Activated B cell treated with CpG ODN at 0.5 μM for 24 hours (primary cell): ENCODE measurements at regions of chr1 and their contacts with region 1.

Region 1: DNA sequence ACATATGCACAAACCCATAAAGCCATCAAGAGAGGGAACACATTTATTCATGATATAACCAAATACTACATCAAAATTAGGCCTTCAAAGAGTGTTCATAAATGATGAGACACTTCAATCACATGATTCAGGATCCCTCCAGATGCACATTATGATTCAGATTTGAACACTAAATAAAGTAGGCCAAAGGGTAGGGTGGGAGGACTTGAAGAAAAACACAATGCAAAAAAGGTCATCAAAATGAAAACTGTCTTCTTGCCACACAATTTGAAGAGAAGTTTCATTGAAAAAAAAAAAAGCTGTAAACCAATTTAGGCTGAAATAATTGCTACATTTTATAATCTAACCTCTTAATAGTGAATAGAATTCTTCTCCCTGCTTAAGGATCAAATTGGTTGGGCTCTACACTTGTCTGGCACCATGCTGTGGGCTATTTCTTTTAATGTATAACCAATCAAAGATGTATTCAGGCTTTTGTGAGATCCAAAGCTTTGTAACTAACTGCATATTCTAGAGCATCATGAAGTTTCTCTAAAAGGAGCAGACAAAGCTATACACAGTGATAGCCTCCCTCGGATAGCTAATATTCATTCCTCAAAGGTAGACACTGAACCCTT is 58.1 kb downstream of the ZSWIM5 start:
- DNase-seq: no peak
- ATAC-seq: no peak
- H3K4me3 Mint-ChIP-seq: no peak overlapping the region
- H3K27ac Mint-ChIP-seq: no peak overlapping the region
- H3K4me1 Mint-ChIP-seq: no peaks in the 10 kb centered on the region
- H3K27me3 Mint-ChIP-seq: peaks cover 6% of the 10 kb centered on the region
- CTCF ChIP-seq: no peak

Region 2: GRCh38 chr1:45205910-45206721 is 57.8 kb after region 1 on chr1 and contains the start of gene ZSWIM5:
- CTCF ChIA-PET with region 1: no interaction called
- POLR2A ChIA-PET with region 1: interaction called, 10 read pairs
- intact Hi-C with region 1: no loop called
- DNase-seq: peak; percentile 64
- ATAC-seq: peak; percentile 79
- H3K4me3 Mint-ChIP-seq: peak within 1 kb of the TSS; percentile 84
- H3K27ac Mint-ChIP-seq: peak within 1 kb of the TSS; percentile 33
- H3K4me1 Mint-ChIP-seq: peaks cover 13% of the 10 kb centered on the region
- H3K27me3 Mint-ChIP-seq: peaks cover 22% of the 10 kb centered on the region
- CTCF ChIP-seq: no peak
- total RNA-seq, gene ZSWIM5: 1.6 and 2.3 TPM in 2 replicates